CD8-positive, alpha-beta T cell (primary cell): ENCODE measurements at regions of chr10 and their contacts with region 1.

Region 1: GRCh38 chr10:16777473-16778370 is 39.5 kb downstream of the RSU1 start:
- DNase-seq: peak in 3 of 9 experiments; percentile 50 to 81 (median 69)
- ATAC-seq: peak; percentile 67
- H3K4me3 ChIP-seq: no peak overlapping the region
- H3K4me3 Mint-ChIP-seq: no peak overlapping the region
- H3K27ac ChIP-seq: no peak overlapping the region
- H3K27ac Mint-ChIP-seq: peak overlapping the region; percentile 82
- H3K4me1 ChIP-seq: peaks cover 11% of the 10 kb centered on the region
- H3K4me1 Mint-ChIP-seq: peaks cover 40% of the 10 kb centered on the region
- H3K27me3 ChIP-seq: no peaks in the 10 kb centered on the region
- H3K27me3 Mint-ChIP-seq: no peaks in the 10 kb centered on the region
- CTCF ChIP-seq: peak; percentile 67

Region 2: GRCh38 chr10:15433850-15434537 is 1343.7 kb before region 1 on chr10:
- CTCF ChIA-PET with region 1: no interaction called
- POLR2A ChIA-PET with region 1: no interaction called
- intact Hi-C with region 1: loop called (anchors 2 to 5 kb)
- DNase-seq: peak in 5 of 9 experiments; percentile 8 to 72 (median 37)
- ATAC-seq: no peak
- H3K4me3 ChIP-seq: peak overlapping the region; percentile 2 to 29
- H3K4me3 Mint-ChIP-seq: peak overlapping the region; percentile 70
- H3K27ac ChIP-seq: no peak overlapping the region
- H3K27ac Mint-ChIP-seq: no peak overlapping the region
- H3K4me1 ChIP-seq: no peaks in the 10 kb centered on the region
- H3K4me1 Mint-ChIP-seq: peaks cover 8% of the 10 kb centered on the region
- H3K27me3 ChIP-seq: peaks cover 0 to 3% of the 10 kb centered on the region in 2 experiments
- H3K27me3 Mint-ChIP-seq: peaks cover 26% of the 10 kb centered on the region
- CTCF ChIP-seq: peak; percentile 93

Region 3: GRCh38 chr10:15879058-15879457 is 898.7 kb before region 1 on chr10:
- CTCF ChIA-PET with region 1: no interaction called
- POLR2A ChIA-PET with region 1: no interaction called
- intact Hi-C with region 1: loop called (anchors 5 kb)
- DNase-seq: peak in 2 of 9 experiments; percentile 32 to 52
- ATAC-seq: peak; percentile 52
- H3K4me3 ChIP-seq: no peak overlapping the region
- H3K4me3 Mint-ChIP-seq: no peak overlapping the region
- H3K27ac ChIP-seq: no peak overlapping the region
- H3K27ac Mint-ChIP-seq: no peak overlapping the region
- H3K4me1 ChIP-seq: no peaks in the 10 kb centered on the region
- H3K4me1 Mint-ChIP-seq: no peaks in the 10 kb centered on the region
- H3K27me3 ChIP-seq: peaks cover 0 to 3% of the 10 kb centered on the region in 2 experiments
- H3K27me3 Mint-ChIP-seq: peaks cover 51% of the 10 kb centered on the region
- CTCF ChIP-seq: peak; percentile 67